ENCODE measurements at regions of chr4 and their contacts with region 1.

Region 1: DNA sequence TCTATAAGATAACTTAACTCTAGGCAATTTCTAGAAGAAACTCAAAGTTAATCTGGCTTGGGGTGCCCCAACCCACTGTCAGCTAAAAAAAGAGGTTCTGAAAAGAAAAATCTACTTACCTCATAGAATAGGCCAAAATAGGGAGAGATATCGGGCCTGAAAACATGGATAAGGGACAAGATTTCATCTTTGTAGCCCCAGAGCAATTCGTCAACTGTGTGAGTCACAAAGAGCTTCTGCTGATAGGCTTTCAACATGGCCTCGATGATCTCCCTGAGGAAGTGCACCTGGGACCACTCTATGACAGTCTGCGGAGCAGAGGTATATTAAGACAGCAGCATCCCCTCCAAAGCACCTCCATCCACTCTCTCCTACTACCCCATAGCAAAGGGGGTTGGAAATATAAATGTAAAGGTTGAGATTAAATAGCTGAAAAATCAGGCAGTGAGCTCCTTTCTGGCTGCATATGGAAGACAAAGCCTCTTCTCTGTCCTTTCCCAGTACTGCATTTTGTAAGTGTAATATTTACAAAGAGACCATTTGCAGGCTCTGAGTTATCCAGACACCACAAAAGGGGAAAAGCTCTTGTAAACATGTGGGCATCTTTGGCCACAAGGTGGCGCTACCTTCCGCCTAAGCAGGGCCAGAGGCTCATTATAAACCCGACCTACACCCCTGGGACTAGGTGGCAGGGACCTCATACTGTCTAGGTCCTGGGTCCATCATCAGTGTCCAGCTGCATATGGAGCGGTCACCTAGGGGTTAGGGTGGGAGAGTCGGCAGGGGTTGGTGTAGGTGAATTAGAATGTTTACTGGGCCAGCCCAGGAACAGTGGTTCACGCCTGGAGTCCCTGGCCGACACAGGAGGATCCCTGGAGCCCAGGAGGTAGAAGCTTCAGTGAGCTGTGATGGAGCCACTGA is 31.5 kb upstream of the NUP54 start:
- DNase-seq: no peak
- H3K4me3 ChIP-seq: no peak overlapping the region
- CTCF ChIP-seq: peak; percentile 86

Region 2: DNA sequence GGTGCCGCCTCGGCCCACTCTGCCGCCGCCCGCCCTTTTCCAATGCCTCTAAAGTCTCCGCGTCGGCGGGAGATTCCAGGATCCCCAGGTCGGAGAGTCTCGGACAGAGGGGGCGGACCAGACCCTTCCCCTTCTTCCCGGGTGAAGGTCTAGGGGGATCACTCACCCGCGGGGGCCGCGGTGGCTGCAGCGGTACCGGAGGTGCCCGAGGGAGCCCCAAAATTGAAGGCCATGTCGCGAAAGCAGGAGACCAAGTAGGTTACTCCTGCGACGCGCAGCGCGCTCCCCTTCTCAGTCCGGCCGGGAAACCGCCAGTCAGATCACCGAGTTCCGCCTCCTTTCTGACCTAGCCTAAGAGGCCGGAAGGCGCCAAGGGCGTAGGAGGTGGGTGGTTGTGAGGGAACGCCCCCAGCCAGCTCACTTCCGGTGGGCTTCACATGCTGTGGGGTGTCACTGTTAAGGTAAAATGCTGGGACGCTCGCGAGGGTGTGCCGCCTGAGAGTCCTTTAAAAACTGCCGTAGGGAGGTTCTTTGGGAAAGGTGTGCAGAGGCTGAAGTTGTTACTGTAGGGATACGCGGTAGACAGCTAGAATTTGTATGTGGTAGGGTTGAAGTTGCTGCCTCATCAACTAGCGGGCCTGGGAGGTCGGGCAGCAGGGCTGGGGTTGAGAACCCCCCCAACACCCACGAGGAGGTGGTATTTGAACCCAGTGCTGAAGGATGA is 31.4 kb before region 1 on chr4 and contains the start of gene NUP54:
- CTCF ChIA-PET with region 1: interaction called, 57 read pairs
- POLR2A ChIA-PET with region 1: no interaction called
- DNase-seq: peak; percentile 63
- H3K4me3 ChIP-seq: peak within 1 kb of the TSS; percentile 94
- CTCF ChIP-seq: no peak

Region 3: GRCh38 chr4:76198411-76199237 is 19.0 kb after region 1 on chr4:
- CTCF ChIA-PET with region 1: interaction called, 22 read pairs
- POLR2A ChIA-PET with region 1: no interaction called
- DNase-seq: no peak
- H3K4me3 ChIP-seq: no peak overlapping the region
- CTCF ChIP-seq: no peak

Region 4: DNA sequence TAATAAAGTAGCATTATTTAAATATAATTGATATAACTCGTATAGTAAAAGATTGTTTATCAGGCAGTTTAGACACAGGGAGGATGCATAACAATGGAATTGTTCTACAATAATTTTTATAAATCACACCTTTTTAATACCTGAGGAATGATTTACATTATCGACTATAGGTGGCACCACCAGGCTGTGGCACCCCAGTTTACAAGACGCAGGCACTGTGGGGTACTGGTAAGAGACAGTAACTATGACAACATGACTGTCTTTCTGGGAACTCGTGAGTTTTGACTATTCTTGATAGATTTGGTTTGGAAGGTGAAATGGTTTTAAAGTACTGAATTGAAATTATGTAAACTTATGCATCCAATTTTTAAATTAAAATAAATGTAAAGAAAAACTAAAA is 99.8 kb after region 1 on chr4:
- CTCF ChIA-PET with region 1: interaction called, 14 read pairs
- POLR2A ChIA-PET with region 1: no interaction called
- DNase-seq: no peak
- H3K4me3 ChIP-seq: no peak overlapping the region
- CTCF ChIP-seq: no peak

Region 5: GRCh38 chr4:76377911-76378310 is 198.3 kb after region 1 on chr4:
- CTCF ChIA-PET with region 1: interaction called, 166 read pairs
- POLR2A ChIA-PET with region 1: no interaction called
- DNase-seq: no peak
- H3K4me3 ChIP-seq: no peak overlapping the region
- CTCF ChIP-seq: peak; percentile 29

Region 6: GRCh38 chr4:76499461-76499860 is 319.8 kb after region 1 on chr4:
- CTCF ChIA-PET with region 1: interaction called, 35 read pairs
- POLR2A ChIA-PET with region 1: no interaction called
- DNase-seq: no peak
- H3K4me3 ChIP-seq: no peak overlapping the region
- CTCF ChIP-seq: no peak